Mammary epithelial cell (primary cell): ENCODE measurements at regions of chr14 and their contacts with region 1.

Region 1: DNA sequence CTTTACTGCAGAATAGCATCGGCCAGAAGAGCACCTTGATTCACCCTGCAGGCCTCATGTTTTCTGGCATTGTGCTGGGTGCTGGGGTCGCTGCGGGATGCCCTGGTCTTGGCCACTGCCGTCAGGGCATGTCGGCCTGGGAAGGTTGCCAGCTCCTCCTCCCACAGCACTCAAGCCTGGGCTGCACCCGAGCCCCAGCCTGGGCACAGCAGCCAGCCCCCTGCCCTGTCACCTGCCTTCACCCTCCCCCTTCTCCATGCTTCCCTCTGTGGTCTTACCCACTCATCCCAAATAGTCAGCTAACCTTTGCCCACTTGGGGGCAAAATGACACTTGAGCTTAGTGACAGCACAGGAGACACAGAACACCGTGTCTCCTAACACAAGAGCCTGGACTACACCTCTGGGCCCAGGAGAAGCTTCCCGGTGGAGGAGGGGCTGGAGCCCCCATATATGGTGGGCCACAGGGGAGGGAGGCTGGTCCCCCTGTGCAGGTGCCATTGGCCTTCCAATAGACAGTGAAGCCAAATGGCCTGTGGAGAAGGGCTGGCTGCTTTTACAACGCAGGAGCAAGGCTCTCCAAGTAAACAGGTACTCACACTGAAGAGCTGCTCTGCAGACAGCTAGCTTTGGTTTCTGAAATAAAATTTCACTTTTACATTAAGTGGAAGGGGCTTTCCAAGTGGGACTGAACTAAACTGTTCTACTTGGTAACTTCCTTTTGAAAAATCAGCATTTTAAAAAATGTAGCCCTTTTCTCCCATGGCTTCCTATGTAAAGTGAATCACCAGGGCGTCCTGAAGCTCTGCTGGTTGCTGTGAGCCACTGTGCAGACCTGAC is 51.2 kb upstream of the AMN start:
- DNase-seq: no peak
- H3K4me3 ChIP-seq: no peak overlapping the region
- H3K27ac ChIP-seq: no peak overlapping the region
- H3K4me1 ChIP-seq: peaks cover 5% of the 10 kb centered on the region
- H3K27me3 ChIP-seq: no peaks in the 10 kb centered on the region
- CTCF ChIP-seq: no peak

Region 2: GRCh38 chr14:102795060-102795925 is 75.9 kb before region 1 on chr14:
- CTCF ChIA-PET with region 1: no interaction called
- dilution Hi-C with region 1: loop called (anchors 5 kb)
- in situ Hi-C with region 1: no loop called
- intact Hi-C with region 1: no loop called
- DNase-seq: peak; percentile 83
- H3K4me3 ChIP-seq: peak overlapping the region in 1 of 3 experiments; percentile 21
- H3K27ac ChIP-seq: peak overlapping the region; percentile 75
- H3K4me1 ChIP-seq: peaks cover 15% of the 10 kb centered on the region
- H3K27me3 ChIP-seq: no peaks in the 10 kb centered on the region
- CTCF ChIP-seq: peak; percentile 24 to 26

Region 3: DNA sequence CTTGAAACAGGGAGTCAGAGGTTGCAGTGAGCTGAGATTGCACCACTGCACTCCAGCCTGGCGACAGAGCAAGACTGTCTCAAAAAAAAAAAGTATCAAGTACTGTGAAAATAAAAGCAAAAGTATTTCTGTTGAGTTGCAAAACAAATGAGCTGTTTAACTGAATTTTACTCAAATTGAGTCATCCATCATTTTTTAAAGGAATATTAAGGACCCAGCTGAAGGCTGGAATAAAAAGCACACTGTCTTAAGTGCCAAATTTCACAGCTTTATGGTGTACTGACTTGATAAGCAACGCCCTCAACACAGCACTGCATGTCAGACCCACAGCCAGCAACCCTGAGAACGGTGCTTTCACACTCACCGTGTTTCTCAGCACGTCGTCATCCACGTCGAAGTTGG is 109.2 kb after region 1 on chr14:
- CTCF ChIA-PET with region 1: no interaction called
- dilution Hi-C with region 1: no loop called
- in situ Hi-C with region 1: no loop called
- intact Hi-C with region 1: no loop called
- DNase-seq: no peak
- H3K4me3 ChIP-seq: no peak overlapping the region
- H3K27ac ChIP-seq: no peak overlapping the region
- H3K4me1 ChIP-seq: no peaks in the 10 kb centered on the region
- H3K27me3 ChIP-seq: no peaks in the 10 kb centered on the region
- CTCF ChIP-seq: no peak

Region 4: DNA sequence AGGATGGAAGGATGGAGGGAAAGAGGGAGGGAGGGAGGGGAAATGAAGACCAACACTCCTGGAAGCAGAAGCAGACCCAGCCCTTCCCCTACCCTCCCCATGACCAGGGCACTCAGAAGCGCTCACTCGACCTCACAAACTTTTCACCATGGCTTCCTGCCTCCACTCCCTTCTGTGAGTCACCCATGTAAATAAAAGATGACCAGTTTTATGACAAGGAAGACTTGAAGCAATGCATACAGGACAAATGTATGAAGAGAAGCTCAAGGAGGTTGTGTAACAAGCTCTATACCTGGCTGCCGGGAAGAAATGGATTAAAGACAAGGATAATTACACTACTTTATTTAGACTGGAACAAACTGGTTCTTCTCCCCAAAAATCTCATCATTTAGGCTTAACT is 122.3 kb after region 1 on chr14:
- CTCF ChIA-PET with region 1: no interaction called
- dilution Hi-C with region 1: no loop called
- in situ Hi-C with region 1: no loop called
- intact Hi-C with region 1: no loop called
- DNase-seq: peak; percentile 86
- H3K4me3 ChIP-seq: no peak overlapping the region
- H3K27ac ChIP-seq: peak overlapping the region; percentile 55
- H3K4me1 ChIP-seq: peaks cover 15% of the 10 kb centered on the region
- H3K27me3 ChIP-seq: no peaks in the 10 kb centered on the region
- CTCF ChIP-seq: no peak

Region 5: GRCh38 chr14:103346286-103346685 is 475.1 kb after region 1 on chr14:
- CTCF ChIA-PET with region 1: no interaction called
- dilution Hi-C with region 1: no loop called
- in situ Hi-C with region 1: no loop called
- intact Hi-C with region 1: no loop called
- DNase-seq: no peak
- H3K4me3 ChIP-seq: no peak overlapping the region
- H3K27ac ChIP-seq: no peak overlapping the region
- H3K4me1 ChIP-seq: no peaks in the 10 kb centered on the region
- H3K27me3 ChIP-seq: no peaks in the 10 kb centered on the region
- CTCF ChIP-seq: no peak